Vagina (tissue), 2 donors: ENCODE measurements at regions of chr12 and their contacts with region 1.

Region 1: GRCh38 chr12:56987551-56988053 is 18.7 kb downstream of the ZBTB39 start:
- DNase-seq: peak; percentile 67 to 86
- H3K4me3 ChIP-seq: no peak overlapping the region
- H3K27ac ChIP-seq: no peak overlapping the region
- H3K4me1 ChIP-seq: peaks cover 35% of the 10 kb centered on the region
- H3K27me3 ChIP-seq: no peaks in the 10 kb centered on the region
- CTCF ChIP-seq: peak; percentile 85 to 92 (median 87)
- POLR2A ChIP-seq: no peak

Region 2: DNA sequence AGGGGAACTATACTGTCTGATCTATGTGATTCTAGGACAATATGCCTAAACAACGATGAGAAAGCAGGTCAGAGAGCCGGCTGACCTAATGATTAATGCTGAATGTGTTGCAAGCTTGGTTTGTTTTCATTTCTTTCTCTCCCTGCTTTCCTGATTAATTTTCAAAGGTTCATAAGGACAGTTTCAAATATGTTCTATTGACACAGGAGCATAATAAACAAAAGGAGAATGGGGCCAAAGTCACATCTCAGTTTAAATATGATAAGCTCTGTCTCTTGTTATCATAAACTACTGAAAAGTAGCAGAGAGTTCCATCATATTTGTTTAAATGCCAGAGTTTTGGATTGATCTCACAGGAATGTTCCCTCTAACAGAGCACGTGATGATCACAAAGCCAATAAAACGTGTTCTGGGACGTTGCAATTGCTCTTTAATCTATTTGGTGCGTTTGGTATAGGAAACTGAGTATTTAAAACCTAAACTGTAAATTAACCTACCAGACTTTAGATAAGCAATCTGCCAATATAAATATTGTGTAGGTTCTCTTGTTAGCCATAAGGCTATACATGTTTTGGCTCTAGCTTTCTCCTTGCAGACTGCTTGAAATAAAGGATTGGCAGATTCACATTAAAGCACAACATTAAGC is 228.2 kb before region 1 on chr12:
- intact Hi-C with region 1: loop called (anchors 5 kb)
- DNase-seq: no peak
- H3K4me3 ChIP-seq: no peak overlapping the region
- H3K27ac ChIP-seq: no peak overlapping the region
- H3K4me1 ChIP-seq: no peaks in the 10 kb centered on the region
- H3K27me3 ChIP-seq: no peaks in the 10 kb centered on the region
- CTCF ChIP-seq: no peak
- POLR2A ChIP-seq: no peak

Region 3: DNA sequence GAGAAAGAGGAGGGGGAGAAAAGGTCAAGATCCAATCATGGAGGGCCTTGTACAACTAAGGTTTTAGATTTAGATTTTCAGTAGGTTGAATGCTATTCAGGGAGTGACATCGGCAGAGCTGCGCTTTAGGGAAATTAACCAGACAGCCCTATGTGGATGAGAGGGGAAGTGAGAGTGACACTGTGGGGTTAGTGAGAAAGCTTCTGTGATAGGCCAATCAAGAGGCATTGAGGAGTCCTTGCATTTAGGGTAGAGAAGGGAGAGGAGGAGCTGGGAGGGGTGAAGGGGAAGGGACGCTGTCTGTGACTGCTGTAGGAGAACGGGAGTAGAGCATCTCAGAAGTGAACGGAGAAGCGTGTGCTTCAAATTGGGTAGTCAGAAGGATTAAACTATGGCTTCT is 221.1 kb before region 1 on chr12:
- intact Hi-C with region 1: loop called (anchors 5 kb)
- DNase-seq: no peak
- H3K4me3 ChIP-seq: peak overlapping the region in 1 of 2 donors; percentile 36
- H3K27ac ChIP-seq: peak overlapping the region; percentile 7
- H3K4me1 ChIP-seq: peaks cover 6% of the 10 kb centered on the region
- H3K27me3 ChIP-seq: no peaks in the 10 kb centered on the region
- CTCF ChIP-seq: no peak
- POLR2A ChIP-seq: no peak